CD4-positive, alpha-beta T cell (primary cell): ENCODE measurements at regions of chr1 and their contacts with region 1.

Region 1: DNA sequence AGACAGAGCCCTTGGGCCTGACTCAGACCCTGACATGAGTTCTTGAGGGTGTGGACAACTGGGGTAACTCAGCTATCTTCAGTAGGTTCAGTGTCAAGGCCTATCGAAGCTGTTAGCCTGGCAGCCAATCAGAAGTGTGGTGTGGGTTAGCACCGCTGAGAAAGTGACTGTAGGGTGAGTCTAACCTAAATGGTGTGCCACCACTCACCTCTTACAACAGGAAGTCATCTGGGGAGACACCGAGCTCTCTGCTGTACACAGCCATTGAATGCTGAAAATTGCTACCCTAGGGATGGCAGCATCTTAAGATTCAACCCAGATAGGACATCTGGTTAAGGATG is 44.6 kb downstream of the RASSF5 start:
- DNase-seq: peak; percentile 53 to 94 (median 70)
- ATAC-seq: peak; percentile 90
- H3K4me3 ChIP-seq: no peak overlapping the region
- H3K4me3 Mint-ChIP-seq: peak overlapping the region; percentile 80
- H3K27ac ChIP-seq: peak overlapping the region; percentile 72 to 81
- H3K27ac Mint-ChIP-seq: peak overlapping the region; percentile 86
- H3K4me1 ChIP-seq: peaks cover 64% of the 10 kb centered on the region
- H3K4me1 Mint-ChIP-seq: peaks cover 63% of the 10 kb centered on the region
- H3K27me3 ChIP-seq: no peaks in the 10 kb centered on the region
- H3K27me3 Mint-ChIP-seq: no peaks in the 10 kb centered on the region
- CTCF ChIP-seq: peak; percentile 39

Region 2: DNA sequence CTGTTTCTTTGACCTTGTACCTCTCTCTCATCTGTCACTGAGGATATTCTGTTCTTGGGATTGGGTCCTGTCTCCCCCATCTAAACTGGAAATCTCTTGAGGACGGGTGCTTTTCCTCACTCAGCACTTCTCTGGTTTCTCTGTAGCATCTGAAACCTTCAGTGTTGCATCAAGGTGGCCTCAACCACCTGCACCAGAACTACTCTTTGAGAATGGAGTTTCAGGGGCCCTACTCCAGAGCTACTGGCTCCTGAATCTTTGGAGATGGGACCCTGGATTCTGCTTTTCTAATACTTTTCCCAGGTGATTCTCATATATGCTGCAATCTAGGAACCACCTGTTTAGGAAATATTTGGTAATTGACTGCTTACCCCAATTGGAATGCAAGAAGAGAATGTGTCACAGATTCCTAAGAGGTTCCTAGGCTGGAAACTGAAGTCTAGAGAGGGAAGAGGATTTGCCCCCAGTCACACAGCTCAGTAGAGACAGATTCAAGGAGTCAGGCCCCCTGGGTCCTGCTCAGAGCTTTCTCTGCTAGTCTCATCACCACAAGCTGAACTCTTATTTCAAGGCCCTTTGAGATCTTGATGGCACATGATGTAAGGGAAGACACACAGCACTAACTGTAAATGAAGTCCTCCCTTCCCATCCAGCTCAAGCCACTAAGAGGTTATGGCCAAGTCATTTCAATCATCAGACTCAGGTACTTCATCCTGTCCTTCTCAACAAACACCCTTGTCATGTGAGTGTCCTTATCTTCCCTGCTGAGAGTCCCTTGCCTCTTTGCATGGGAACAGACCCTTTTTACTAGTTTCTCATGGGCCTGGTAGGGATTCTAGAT is 11.6 kb after region 1 on chr1:
- CTCF ChIA-PET with region 1: interaction called, 14 read pairs
- POLR2A ChIA-PET with region 1: interaction called, 37 read pairs
- intact Hi-C with region 1: loop called in 1 of 2 experiments (anchors 1 kb)
- DNase-seq: no peak
- ATAC-seq: peak; percentile 21
- H3K4me3 ChIP-seq: peak overlapping the region; percentile 25
- H3K4me3 Mint-ChIP-seq: peak overlapping the region; percentile 76
- H3K27ac ChIP-seq: peak overlapping the region; percentile 56 to 82
- H3K27ac Mint-ChIP-seq: peak overlapping the region; percentile 86
- H3K4me1 ChIP-seq: peaks cover 94% of the 10 kb centered on the region
- H3K4me1 Mint-ChIP-seq: peaks cover 100% of the 10 kb centered on the region
- H3K27me3 ChIP-seq: no peaks in the 10 kb centered on the region
- H3K27me3 Mint-ChIP-seq: no peaks in the 10 kb centered on the region
- CTCF ChIP-seq: no peak

Region 3: DNA sequence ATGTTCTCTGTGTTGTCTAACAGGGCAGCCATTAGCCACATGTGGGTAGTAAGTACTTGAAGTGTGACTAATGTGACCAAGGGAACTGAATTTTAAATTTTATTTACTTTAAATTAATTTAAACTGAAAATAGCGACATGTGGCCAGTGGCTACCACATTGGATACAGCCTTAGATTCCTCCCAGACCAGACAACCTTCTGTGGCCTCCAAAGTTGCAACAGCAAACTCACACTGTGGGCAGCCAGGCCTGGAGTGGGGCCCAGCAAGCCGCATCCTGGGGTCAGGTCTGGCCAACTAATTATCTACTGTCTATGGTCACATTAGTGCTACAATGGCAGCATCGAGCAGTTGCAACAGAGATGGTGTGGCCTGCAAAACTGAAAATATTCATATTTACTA is 48.6 kb after region 1 on chr1:
- CTCF ChIA-PET with region 1: no interaction called
- POLR2A ChIA-PET with region 1: no interaction called
- intact Hi-C with region 1: no loop called
- DNase-seq: no peak
- ATAC-seq: no peak
- H3K4me3 ChIP-seq: no peak overlapping the region
- H3K4me3 Mint-ChIP-seq: no peak overlapping the region
- H3K27ac ChIP-seq: no peak overlapping the region
- H3K27ac Mint-ChIP-seq: no peak overlapping the region
- H3K4me1 ChIP-seq: no peaks in the 10 kb centered on the region
- H3K4me1 Mint-ChIP-seq: no peaks in the 10 kb centered on the region
- H3K27me3 ChIP-seq: no peaks in the 10 kb centered on the region
- H3K27me3 Mint-ChIP-seq: no peaks in the 10 kb centered on the region
- CTCF ChIP-seq: no peak